MCF 10A (cell line): ENCODE measurements at regions of chr17 and their contacts with region 1.

Region 1: DNA sequence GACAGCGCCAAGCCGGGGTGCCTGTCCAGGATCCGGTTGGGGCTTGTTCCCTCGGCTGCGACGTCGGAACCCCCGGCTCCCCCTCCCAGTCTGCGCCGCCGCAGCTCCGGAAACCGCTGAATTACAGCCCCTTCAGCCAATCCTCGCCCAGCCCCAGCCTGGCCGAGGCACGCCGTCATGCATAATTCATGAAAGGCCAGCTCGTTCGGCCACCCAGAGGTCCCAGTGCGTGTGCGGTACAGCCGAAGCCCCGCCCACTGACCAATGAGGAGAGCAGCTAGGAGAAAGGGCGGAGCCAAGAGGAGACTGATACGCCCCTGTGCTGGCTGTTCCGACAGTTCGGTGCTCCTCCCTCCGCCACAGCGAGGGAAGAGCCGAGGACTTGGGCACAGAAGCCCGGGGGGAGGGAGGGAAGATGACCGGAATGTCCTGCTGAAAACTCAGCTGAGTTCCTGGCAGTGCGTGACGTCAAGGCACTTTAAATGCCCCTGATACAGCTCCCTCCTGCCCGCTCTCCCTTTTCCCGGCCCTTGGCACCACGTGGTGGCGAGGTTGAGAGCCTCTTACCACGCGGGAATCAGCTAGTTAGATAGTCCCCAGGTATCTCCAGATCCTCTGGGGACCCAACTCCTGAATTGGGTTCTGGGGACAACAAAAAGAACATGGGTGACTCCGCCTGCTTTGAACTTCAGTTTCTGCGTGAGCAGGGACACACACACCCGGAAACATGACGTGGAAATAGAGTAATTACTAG is at the start of gene STAT3:
- DNase-seq: peak; percentile 100
- H3K4me3 Mint-ChIP-seq: peak within 1 kb of the TSS; percentile 90
- H3K27ac Mint-ChIP-seq: peak within 1 kb of the TSS; percentile 97
- H3K4me1 Mint-ChIP-seq: peaks cover 25% of the 10 kb centered on the region
- H3K27me3 Mint-ChIP-seq: no peaks in the 10 kb centered on the region
- CTCF ChIP-seq: no peak
- total RNA-seq, gene STAT3: 89.2 and 115 TPM in 2 replicates

Region 2: DNA sequence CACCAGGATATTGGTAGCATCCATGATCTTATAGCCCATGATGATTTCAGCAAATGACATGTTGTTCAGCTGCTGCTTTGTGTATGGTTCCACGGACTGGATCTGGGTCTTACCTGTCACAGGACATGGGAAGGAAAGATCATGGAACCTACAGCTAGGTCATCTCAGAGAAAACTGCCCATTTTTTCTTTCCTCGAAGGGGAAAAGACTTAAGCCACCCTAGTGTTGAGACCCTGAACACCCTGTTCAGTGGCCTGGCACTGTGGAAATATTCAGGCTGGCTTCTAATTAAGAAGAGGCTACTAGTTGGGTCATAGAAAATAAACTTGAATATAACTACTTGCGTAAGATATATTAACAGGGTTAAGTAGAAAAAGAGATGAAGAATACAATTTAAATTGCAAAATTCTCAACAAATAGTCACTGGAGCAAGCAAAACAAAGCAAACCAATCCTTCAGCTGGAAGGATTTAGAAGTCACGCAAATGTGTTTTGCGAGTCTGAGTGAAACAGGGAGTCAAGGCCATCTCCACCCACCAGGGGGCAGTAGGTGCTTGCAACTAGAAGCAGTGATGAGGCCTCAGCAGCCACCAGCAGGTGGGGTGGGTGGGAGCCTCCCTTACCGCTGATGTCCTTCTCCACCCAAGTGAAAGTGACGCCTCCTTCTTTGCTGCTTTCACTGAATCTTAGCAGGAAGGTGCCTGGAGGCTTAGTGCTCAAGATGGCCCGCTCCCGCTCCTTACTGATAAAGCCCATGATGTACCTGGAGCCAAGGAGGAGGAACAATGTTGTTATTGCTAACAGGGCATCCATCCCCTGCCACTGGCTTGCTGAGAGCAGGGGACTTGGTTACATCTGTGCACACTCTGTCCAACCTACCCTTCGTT is 65.9 kb before region 1 on chr17:
- CTCF ChIA-PET with region 1: interaction called, 4 read pairs
- POLR2A ChIA-PET with region 1: interaction called, 26 read pairs
- intact Hi-C with region 1: loop called (anchors 5 kb)
- DNase-seq: peak; percentile 93
- H3K4me3 Mint-ChIP-seq: no peak overlapping the region
- H3K27ac Mint-ChIP-seq: peak overlapping the region; percentile 46
- H3K4me1 Mint-ChIP-seq: peaks cover 11% of the 10 kb centered on the region
- H3K27me3 Mint-ChIP-seq: no peaks in the 10 kb centered on the region
- CTCF ChIP-seq: peak; percentile 99

Region 3: DNA sequence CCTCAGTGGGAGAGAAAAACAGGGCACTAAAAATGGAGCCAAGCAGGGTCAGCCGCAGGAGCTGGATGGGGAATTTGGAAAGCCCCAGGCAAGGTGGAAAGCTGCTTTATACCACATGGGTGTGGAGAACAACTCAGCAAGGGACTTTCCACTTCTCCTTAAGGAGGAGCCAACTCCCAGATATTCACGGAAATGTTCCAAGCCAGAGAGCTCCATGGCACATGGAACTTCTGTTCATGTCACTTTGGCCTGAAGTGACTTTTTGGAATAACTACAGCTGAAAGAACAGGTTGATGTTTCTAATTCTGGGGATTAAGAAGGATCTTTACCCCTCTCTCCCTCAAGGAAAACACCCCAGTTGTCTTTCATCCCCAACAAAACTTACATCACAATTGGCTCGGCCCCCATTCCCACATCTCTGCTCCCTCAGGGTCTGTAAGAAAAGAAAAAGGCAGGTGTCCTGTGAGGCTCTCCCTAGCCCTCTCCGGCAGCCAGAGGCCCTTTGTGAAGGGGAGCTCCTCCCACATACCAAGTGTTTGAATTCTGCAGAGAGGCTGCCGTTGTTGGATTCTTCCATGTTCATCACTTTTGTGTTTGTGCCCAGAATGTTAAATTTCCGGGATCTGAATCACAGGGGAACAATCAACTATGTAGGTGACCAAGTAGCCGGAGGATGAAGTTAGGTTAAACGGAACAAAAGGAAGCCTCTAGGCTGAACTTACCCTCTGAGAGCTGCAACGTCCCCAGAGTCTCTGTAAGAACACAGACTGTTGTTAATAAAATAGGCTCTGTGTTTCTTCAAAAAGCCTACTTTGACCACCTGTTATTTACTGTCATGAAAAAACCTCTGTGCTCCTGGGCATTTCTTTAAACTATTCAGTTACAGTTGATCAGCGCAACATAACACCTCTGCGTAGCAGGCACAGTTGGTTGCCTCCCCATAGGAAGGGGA is 59.3 kb before region 1 on chr17:
- CTCF ChIA-PET with region 1: interaction called, 4 read pairs
- POLR2A ChIA-PET with region 1: interaction called, 38 read pairs
- intact Hi-C with region 1: loop called (anchors 5 kb)
- DNase-seq: peak; percentile 87
- H3K4me3 Mint-ChIP-seq: peak overlapping the region; percentile 58
- H3K27ac Mint-ChIP-seq: peak overlapping the region; percentile 91
- H3K4me1 Mint-ChIP-seq: peaks cover 24% of the 10 kb centered on the region
- H3K27me3 Mint-ChIP-seq: no peaks in the 10 kb centered on the region
- CTCF ChIP-seq: no peak

Region 4: GRCh38 chr17:42399948-42400843 is 11.6 kb after region 1 on chr17:
- CTCF ChIA-PET with region 1: no interaction called
- POLR2A ChIA-PET with region 1: interaction called, 84 read pairs
- intact Hi-C with region 1: no loop called
- DNase-seq: no peak
- H3K4me3 Mint-ChIP-seq: no peak overlapping the region
- H3K27ac Mint-ChIP-seq: no peak overlapping the region
- H3K4me1 Mint-ChIP-seq: peaks cover 6% of the 10 kb centered on the region
- H3K27me3 Mint-ChIP-seq: no peaks in the 10 kb centered on the region
- CTCF ChIP-seq: no peak

Region 5: GRCh38 chr17:42405963-42406495 is 17.5 kb after region 1 on chr17:
- CTCF ChIA-PET with region 1: interaction called, 16 read pairs
- POLR2A ChIA-PET with region 1: interaction called, 84 read pairs
- intact Hi-C with region 1: no loop called
- DNase-seq: peak; percentile 73
- H3K4me3 Mint-ChIP-seq: no peak overlapping the region
- H3K27ac Mint-ChIP-seq: peak overlapping the region; percentile 6
- H3K4me1 Mint-ChIP-seq: peaks cover 28% of the 10 kb centered on the region
- H3K27me3 Mint-ChIP-seq: no peaks in the 10 kb centered on the region
- CTCF ChIP-seq: peak; percentile 74

Region 6: DNA sequence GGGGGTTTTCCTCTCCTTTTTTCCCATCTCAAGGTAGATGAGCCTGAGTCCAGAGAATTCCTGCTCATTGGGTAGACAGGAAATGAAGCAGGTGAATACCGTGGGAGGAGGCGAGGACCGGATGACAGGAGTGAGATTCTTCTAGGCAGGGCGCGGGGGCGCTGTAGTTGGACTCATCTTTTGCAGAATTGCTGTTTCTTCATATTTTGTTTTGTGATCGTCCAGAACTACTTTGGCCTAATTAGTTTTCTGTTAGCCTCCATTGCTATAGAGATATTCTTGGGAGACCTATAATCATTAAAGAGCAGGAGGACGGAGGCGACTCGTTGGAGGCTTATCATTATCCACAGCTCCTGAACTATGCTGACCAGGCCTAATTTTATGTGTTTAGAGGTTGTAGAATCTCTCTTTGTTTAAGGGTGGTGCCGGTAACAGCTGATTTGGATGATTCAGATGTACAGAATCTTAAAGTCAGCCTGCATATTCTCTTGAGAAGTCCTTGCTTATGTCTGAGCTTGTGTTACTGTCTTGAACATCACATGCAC is 70.8 kb after region 1 on chr17:
- CTCF ChIA-PET with region 1: interaction called, 4 read pairs
- POLR2A ChIA-PET with region 1: interaction called, 16 read pairs
- intact Hi-C with region 1: no loop called
- DNase-seq: peak; percentile 63
- H3K4me3 Mint-ChIP-seq: peak overlapping the region; percentile 92
- H3K27ac Mint-ChIP-seq: peak overlapping the region; percentile 92
- H3K4me1 Mint-ChIP-seq: peaks cover 37% of the 10 kb centered on the region
- H3K27me3 Mint-ChIP-seq: no peaks in the 10 kb centered on the region
- CTCF ChIP-seq: peak; percentile 29